ENCODE measurements at regions of chr1 and their contacts with region 1.

Region 1: GRCh38 chr1:91511386-91511785 is 10.7 kb downstream of the CDC7 start:
- DNase-seq: no peak
- ATAC-seq: no peak

Region 2: GRCh38 chr1:91455334-91455733 is 56.1 kb before region 1 on chr1:
- intact Hi-C with region 1: no loop called
- DNase-seq: no peak
- ATAC-seq: peak; percentile 48

Region 3: DNA sequence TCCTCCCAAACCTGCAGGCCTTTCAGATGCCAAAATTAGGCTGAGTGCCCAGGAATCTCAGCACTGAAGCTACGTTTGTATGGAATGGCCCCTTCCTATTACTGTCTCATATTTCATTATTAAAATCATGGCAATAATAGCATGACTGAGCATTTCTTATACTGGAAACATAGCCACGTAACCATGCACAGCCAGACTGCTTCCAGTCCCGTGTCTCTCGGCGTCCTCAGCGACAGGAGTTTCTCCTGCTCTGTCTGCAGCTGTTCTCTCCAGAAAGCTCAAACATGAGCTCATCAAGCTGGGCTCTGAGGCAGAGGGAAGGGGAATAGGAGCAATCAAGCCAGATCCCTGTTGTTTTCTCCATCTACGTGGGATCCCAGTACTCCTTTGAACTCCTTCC is 93.2 kb after region 1 on chr1:
- intact Hi-C with region 1: loop called (anchors 5 kb)
- DNase-seq: no peak
- ATAC-seq: peak; percentile 20

Region 4: GRCh38 chr1:91830242-91831131 is 319.1 kb after region 1 on chr1:
- intact Hi-C with region 1: loop called (anchors 5 kb)
- DNase-seq: peak; percentile 77
- ATAC-seq: peak; percentile 76

Region 5: GRCh38 chr1:91924146-91924545 is 412.8 kb after region 1 on chr1:
- intact Hi-C with region 1: loop called (anchors 1 kb)
- DNase-seq: no peak
- ATAC-seq: no peak

Region 6: DNA sequence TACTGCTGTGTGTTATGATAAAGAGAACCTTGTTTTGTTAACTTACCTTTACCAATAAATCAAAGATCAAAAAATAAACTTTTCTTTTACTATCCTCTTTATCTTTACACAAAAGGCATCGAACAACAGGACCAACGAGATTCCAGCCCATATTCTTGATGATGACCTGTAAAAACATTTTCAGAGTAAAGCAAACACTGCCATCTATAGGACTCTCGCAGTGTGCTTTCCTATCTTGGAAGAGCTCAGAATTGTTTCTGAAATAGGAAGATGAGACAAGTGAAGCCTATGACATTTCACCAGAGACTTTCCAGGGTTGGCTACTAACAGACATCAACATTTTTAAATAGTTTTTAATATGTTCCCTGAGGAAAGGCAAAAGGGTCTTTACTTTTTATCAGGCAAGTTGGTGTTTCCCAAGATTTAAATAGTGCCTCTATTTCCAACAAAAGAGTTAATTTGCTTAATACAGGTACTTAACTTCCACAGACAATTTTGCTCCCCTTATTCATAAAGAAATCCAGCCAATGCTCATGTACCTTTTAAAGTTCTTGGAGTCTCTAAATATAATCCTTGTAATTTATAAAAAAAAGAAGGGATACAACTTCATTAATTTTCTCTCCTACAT is 780.1 kb after region 1 on chr1:
- intact Hi-C with region 1: loop called (anchors 5 kb)
- DNase-seq: no peak
- ATAC-seq: no peak

Measured in Right ventricle myocardium inferior (tissue), 1 donor.